HAP-1 (cell line): ENCODE measurements at regions of chr13 and their contacts with region 1.

Region 1: GRCh38 chr13:24865163-24865953 is 101.4 kb downstream of the RNF17 start:
- DNase-seq: no peak
- H3K4me3 ChIP-seq: no peak overlapping the region
- H3K4me1 ChIP-seq: peaks cover 5% of the 10 kb centered on the region
- H3K27me3 ChIP-seq: peaks cover 39% of the 10 kb centered on the region

Region 2: DNA sequence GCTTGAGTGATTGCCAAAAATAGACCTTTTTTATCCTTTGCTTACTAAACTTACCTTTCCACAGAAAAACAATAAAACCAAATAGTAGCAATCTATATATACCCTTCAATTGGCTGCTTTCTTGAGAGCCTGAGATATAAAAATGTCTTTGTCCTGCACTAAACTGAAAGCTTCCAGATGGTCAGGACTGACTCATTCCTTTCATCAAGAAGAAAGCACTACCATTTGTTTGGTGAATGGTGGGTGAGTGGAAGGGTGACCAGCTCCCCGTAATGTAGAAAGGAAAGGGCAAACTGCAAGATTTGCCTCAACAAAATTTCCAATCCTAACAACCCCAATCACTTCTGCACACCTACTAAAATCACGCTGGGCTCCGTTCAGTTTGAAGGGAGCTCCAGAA is 1499.7 kb before region 1 on chr13:
- in situ Hi-C with region 1: no loop called
- DNase-seq: no peak
- H3K4me3 ChIP-seq: no peak overlapping the region
- H3K4me1 ChIP-seq: no peaks in the 10 kb centered on the region
- H3K27me3 ChIP-seq: no peaks in the 10 kb centered on the region

Region 3: GRCh38 chr13:24922745-24923591 is 57.6 kb after region 1 on chr13:
- in situ Hi-C with region 1: loop called (anchors 10 kb)
- DNase-seq: peak; percentile 88 to 97
- H3K4me3 ChIP-seq: peak overlapping the region; percentile 93
- H3K4me1 ChIP-seq: peaks cover 6% of the 10 kb centered on the region
- H3K27me3 ChIP-seq: no peaks in the 10 kb centered on the region

Region 4: DNA sequence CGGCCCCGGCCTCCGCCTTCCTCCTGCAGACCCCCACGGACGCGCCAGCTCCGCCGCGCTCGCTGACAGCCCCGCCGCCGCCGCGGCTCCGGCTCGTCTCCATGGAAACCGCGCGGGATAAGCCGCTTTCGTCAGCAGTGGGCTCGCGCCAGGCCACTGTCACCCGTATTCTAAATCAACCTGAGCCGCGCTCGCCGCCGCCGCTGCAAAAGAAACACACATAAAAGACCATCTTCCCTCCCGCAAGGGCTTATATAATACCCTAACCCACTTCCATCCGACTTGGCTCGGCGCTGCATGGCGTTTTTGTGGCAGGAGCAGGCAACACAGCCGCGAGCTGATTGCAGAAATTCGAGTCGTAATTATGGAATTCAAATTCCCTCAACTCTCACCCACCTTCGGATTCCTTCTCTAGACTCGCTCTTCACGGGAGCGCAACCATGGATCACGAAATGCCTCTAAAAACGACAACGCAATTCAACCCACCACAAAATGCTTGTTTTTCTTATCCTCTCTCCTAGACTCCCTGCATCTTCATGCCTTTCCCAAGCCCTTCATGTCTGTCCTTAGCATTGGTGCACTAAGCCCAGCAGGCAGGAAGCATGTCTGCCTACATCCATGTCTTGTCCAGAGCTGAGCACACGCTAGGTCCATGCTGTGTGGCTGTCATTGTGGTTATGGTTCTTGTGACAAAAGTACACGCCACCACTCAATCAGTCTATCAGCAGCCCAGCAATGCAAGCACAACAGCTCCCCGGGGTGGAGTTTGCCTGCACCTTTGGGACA is 306.4 kb after region 1 on chr13 and contains the start of gene AMER2:
- in situ Hi-C with region 1: no loop called
- DNase-seq: peak; percentile 52 to 84
- H3K4me3 ChIP-seq: peak within 1 kb of the TSS; percentile 40
- H3K4me1 ChIP-seq: peaks cover 8% of the 10 kb centered on the region
- H3K27me3 ChIP-seq: no peaks in the 10 kb centered on the region